ENCODE measurements at regions of chr14 and their contacts with region 1.

Region 1: GRCh38 chr14:61252369-61253063 is 28.6 kb downstream of the TMEM30B start:
- DNase-seq: peak; percentile 81
- H3K4me3 ChIP-seq: no peak overlapping the region
- H3K27ac ChIP-seq: no peak overlapping the region
- H3K4me1 ChIP-seq: peaks cover 0 to 4% (median 0%) of the 10 kb centered on the region in 4 donors
- H3K27me3 ChIP-seq: no peaks in the 10 kb centered on the region
- CTCF ChIP-seq: peak; percentile 47 to 68 (median 60)
- EP300 ChIP-seq: no peak
- POLR2A ChIP-seq: no peak

Region 2: DNA sequence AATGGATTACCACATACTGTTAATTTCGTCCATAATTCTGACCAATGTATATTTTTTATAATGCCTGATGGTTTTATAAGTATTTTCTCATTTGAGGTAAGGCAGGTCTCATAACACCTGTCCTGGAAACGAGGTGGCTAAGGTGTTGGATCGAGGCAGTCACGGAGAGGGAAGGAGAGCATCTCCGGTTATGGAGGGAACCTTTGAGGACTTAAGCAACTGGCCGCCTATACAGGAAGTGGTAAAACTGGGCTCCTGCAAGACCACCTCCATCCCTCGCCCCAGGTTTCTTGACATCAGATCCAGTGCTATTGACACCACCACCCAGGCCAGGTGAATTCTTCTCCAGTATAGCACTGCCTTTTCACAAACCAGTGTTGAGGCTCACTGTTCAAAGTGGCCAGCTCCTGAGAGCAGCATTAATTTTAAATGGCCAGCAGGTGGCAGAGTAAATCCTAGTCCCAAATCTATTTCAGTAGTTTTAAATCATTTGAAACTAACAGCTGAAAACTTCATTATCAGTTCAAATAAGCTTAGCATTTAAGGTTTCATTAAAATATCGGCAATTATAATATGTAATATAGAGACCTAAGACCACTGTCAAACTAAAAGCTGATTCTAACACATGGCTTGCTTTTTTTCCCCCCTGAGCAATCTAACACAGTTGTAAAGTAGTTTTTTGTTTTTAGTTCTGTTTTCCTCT is 902.7 kb before region 1 on chr14:
- intact Hi-C with region 1: loop called (anchors 2 kb)
- DNase-seq: no peak
- H3K4me3 ChIP-seq: no peak overlapping the region
- H3K27ac ChIP-seq: no peak overlapping the region
- H3K4me1 ChIP-seq: peaks cover 0 to 7% (median 3%) of the 10 kb centered on the region in 4 donors
- H3K27me3 ChIP-seq: no peaks in the 10 kb centered on the region
- CTCF ChIP-seq: peak; percentile 8 to 71 (median 44)
- EP300 ChIP-seq: no peak
- POLR2A ChIP-seq: no peak

Region 3: DNA sequence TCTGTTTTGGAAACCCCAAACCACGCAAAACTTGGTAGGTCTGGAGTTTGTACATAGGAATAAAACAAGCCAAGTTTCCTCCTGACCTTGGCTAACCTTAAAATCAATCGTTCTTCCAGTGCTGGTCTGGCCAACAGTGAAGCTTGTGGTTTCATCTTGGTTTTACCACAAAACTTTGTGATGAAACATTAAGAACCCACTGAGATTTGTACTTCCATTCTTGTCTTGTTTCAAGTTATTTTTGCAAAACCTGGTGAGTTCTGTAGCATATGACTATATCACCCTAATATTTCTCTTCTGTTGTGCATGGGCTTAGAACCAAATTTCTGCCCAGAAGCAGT is 629.6 kb before region 1 on chr14:
- intact Hi-C with region 1: loop called (anchors 1 kb)
- DNase-seq: no peak
- H3K4me3 ChIP-seq: no peak overlapping the region
- H3K27ac ChIP-seq: no peak overlapping the region
- H3K4me1 ChIP-seq: no peaks in the 10 kb centered on the region
- H3K27me3 ChIP-seq: peaks cover 0 to 10% (median 0%) of the 10 kb centered on the region in 3 donors
- CTCF ChIP-seq: no peak
- EP300 ChIP-seq: no peak
- POLR2A ChIP-seq: no peak

Region 4: DNA sequence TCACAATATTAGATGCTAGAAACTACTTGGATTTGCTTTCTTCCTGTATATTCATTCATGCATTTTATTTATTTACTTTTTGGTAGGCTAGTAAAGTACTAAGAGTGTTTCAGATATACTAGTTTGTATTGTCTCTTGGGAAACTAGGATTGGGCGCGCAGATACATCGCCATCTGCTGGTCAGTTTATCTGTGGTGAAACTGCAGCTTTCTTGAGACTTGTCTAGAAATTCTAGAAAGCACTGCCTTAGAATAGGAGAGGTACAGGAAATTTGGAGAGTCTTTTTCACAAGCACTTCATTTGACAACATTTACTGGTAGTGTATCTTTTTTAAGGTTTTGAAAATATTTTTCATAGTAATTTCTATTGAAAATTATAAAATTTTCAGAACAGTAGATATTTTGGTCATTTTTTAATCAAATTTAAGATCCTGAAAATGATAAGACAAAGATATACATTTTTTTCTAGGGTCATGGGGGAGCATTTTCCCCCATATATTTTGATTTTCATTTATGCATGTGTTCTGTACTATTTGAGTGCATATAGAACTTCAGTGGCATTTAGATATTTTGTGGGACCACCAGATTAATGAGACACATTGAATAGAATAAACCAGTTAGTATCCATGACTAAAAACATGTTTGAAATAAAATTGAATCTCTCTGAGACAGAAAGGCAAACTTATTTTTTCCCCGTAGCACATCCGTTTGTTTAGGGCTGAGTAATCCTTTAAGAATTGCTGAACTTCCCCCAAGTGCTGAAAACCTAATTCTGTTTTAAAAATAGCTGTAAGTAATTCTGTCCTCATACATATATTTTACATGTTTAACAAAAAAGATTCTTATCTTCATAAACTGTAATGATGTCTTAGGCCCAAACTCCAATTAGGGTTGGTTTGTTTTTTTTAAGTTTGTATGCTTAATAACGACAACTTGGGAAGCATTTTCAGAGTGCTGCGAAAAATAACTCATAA is 227.0 kb before region 1 on chr14:
- intact Hi-C with region 1: loop called (anchors 5 kb)
- DNase-seq: peak; percentile 78
- H3K4me3 ChIP-seq: no peak overlapping the region
- H3K27ac ChIP-seq: no peak overlapping the region
- H3K4me1 ChIP-seq: no peaks in the 10 kb centered on the region
- H3K27me3 ChIP-seq: no peaks in the 10 kb centered on the region
- CTCF ChIP-seq: peak; percentile 42 to 79 (median 70)
- EP300 ChIP-seq: no peak
- POLR2A ChIP-seq: no peak

Region 5: DNA sequence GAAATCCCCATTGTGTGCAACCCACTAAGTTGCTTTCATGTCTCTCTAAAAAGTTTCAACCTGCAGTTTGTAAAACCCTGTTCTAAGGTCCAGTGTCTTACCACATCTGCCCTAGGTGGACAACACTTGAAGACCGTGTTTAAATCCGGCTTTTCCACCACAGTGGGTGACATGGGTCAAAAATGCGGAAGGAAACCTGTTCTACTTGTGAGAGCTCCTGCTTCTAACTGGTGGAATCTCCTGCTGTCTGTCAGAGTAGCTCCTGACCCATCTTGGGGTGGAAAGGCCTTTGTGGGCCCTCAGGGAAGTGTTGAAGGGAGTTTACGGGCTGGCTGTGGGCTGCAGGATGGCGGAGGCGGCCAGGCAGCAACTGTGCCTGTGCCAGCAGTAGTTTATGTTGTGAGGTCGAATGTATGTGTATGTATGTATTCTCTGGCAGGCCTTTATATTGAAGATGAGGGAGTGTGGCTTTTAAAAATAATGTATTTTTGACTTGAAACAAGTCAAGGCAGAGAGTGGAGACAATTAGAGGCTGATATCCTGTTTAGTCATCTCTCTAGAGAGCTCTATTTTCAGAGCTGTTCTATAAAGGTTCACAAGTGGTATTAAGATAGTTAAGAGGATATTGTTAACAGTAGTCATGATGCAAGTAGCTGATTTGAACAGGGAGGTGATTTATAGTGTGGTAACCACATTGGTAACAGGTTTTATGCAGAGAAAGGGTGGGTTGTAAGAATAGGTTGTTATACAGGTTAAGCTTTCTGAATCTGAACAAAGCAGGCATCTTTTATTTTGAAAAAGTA is 135.9 kb after region 1 on chr14:
- intact Hi-C with region 1: no loop called
- DNase-seq: no peak
- H3K4me3 ChIP-seq: no peak overlapping the region
- H3K27ac ChIP-seq: peak overlapping the region in 1 of 4 donors; percentile 38
- H3K4me1 ChIP-seq: no peaks in the 10 kb centered on the region
- H3K27me3 ChIP-seq: no peaks in the 10 kb centered on the region
- CTCF ChIP-seq: no peak
- EP300 ChIP-seq: no peak
- POLR2A ChIP-seq: no peak